ENCODE measurements at regions of chr13 and their contacts with region 1.

Region 1: GRCh38 chr13:102773441-102774215 is at the start of gene TEX30:
- DNase-seq: peak; percentile 51 to 80
- ATAC-seq: peak; percentile 97 to 98
- H3K4me3 ChIP-seq: peak within 1 kb of the TSS; percentile 57
- H3K27ac ChIP-seq: peak within 1 kb of the TSS; percentile 81 to 89
- H3K4me1 ChIP-seq: 0 out of 3 replicates have a peak, but pooled peaks cover 4% of the 10 kb centered on the region
- CTCF ChIP-seq: no peak
- EP300 ChIP-seq: no peak
- POLR2A ChIP-seq: 0 out of 2 replicates have a peak, but pooled peaks have one; percentile 91
- RAD21 ChIP-seq: no peak
- polyA plus RNA-seq, gene TEX30: 15.2 and 21.3 TPM in 2 replicates

Region 2: GRCh38 chr13:101773062-101773461 is 1000.6 kb before region 1 on chr13:
- CTCF ChIA-PET with region 1: no interaction called
- POLR2A ChIA-PET with region 1: no interaction called
- DNase-seq: peak in 1 of 2 experiments; percentile 2
- ATAC-seq: no peak
- H3K4me3 ChIP-seq: no peak overlapping the region
- H3K27ac ChIP-seq: no peak overlapping the region
- H3K4me1 ChIP-seq: no peaks in the 10 kb centered on the region
- CTCF ChIP-seq: no peak
- EP300 ChIP-seq: no peak
- POLR2A ChIP-seq: no peak
- RAD21 ChIP-seq: no peak

Region 3: DNA sequence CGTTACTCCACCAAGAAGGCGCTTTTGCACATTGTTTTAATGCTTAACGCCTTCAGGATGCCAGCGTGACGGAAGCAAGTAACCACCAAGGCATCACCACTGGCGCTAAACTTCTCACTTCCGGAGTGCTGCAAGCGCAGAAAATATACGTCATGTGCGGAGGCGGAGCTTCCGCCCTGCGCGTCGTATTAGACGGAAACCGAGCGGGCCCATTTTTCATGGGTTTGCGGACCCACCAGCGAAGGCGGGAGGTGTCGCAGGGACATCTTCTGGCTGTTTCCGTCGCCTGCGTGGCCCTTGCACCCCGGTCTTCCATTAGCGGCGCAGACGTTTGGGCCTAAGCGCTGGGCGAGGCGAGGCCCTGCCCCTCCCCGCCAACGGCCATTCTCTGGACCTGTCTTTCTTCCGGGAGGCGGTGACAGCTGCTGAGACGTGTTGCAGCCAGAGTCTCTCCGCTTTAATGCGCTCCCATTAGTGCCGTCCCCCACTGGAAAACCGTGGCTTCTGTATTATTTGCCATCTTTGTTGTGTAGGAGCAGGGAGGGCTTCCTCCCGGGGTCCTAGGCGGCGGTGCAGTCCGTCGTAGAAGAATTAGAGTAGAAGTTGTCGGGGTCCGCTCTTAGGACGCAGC is 72.1 kb after region 1 on chr13 and contains the start of gene ERCC5:
- CTCF ChIA-PET with region 1: interaction called, 4 read pairs
- POLR2A ChIA-PET with region 1: interaction called, 12 read pairs
- DNase-seq: peak; percentile 28 to 95
- ATAC-seq: peak; percentile 94 to 96
- H3K4me3 ChIP-seq: peak within 1 kb of the TSS; percentile 99
- H3K27ac ChIP-seq: peak within 1 kb of the TSS; percentile 84 to 96
- H3K4me1 ChIP-seq: peaks cover 8% of the 10 kb centered on the region; the same call in 1 of the 3 replicates
- CTCF ChIP-seq: no peak
- EP300 ChIP-seq: no peak
- POLR2A ChIP-seq: peak; percentile 24
- RAD21 ChIP-seq: 0 out of 5 replicates have a peak, but pooled peaks of 1 of the 2 experiments have one; percentile 19
- polyA plus RNA-seq, gene ERCC5: 19.5 and 24.4 TPM in 2 replicates

Region 4: GRCh38 chr13:102935896-102936321 is 162.3 kb after region 1 on chr13:
- CTCF ChIA-PET with region 1: no interaction called
- POLR2A ChIA-PET with region 1: no interaction called
- DNase-seq: no peak
- ATAC-seq: no peak
- H3K4me3 ChIP-seq: no peak overlapping the region
- H3K27ac ChIP-seq: no peak overlapping the region
- H3K4me1 ChIP-seq: no peaks in the 10 kb centered on the region
- CTCF ChIP-seq: no peak
- EP300 ChIP-seq: no peak
- POLR2A ChIP-seq: no peak
- RAD21 ChIP-seq: no peak

Measured in A549 (cell line).